ENCODE measurements at regions of chr4 and their contacts with region 1.

Region 1: GRCh38 chr4:151362404-151363164 is 37.2 kb upstream of the SH3D19 start:
- DNase-seq: peak; percentile 58 to 74
- H3K4me3 ChIP-seq: no peak overlapping the region
- H3K27ac ChIP-seq: no peak overlapping the region
- H3K4me1 ChIP-seq: no peaks in the 10 kb centered on the region
- H3K27me3 ChIP-seq: no peaks in the 10 kb centered on the region
- CTCF ChIP-seq: peak; percentile 90

Region 2: DNA sequence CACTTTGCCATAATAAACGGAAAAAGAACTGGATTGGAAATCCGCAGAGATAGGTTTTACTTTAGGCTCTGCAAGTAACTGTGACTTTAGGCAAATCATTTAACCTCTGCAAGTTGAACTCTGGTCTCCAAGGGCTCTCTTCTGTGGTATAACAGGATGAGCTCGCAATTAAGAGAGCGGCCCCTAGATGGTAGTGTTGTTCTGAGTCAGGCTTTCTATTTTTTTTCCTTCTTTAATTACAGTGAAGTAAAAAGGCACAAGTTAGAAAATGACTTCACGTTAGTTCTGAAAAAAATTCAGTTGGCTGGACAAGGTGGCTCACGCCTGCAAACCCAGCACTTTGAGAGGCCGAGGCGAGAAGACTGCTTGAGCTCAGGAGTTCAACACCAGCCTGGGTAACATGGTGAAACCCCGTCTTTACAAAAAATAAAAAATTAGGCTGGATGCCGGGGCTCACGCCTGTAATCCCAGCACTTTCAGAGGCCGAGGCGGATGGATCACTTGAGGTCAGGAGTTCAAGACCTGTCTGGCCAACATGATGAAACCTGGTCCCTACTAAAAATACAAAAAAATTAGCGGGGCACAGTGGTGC is 245.1 kb before region 1 on chr4:
- CTCF ChIA-PET with region 1: interaction called, 4 read pairs
- POLR2A ChIA-PET with region 1: no interaction called
- intact Hi-C with region 1: loop called (anchors 1 kb)
- DNase-seq: peak; percentile 56 to 59
- H3K4me3 ChIP-seq: no peak overlapping the region
- H3K27ac ChIP-seq: no peak overlapping the region
- H3K4me1 ChIP-seq: no peaks in the 10 kb centered on the region
- H3K27me3 ChIP-seq: no peaks in the 10 kb centered on the region
- CTCF ChIP-seq: peak; percentile 77

Region 3: DNA sequence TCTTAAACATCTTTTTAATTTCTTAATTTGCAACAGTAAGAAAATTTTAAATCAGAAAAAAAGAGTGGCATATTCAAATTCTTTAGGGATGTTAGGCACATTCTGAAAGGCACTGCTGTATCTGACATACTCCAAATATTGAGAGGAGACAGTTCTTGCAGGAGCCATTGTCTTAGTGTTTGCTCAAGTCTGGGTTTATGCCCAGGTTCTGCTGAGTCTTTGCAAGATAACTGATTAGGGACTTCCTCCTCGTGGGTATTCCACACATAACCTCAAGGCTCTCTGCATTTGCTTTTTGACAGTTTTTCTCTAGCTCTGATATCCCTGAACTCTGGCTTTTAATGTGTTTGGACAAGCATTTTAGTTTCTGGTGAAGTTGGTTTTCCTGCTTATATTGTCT is 210.6 kb before region 1 on chr4:
- CTCF ChIA-PET with region 1: no interaction called
- POLR2A ChIA-PET with region 1: no interaction called
- intact Hi-C with region 1: no loop called
- DNase-seq: no peak
- H3K4me3 ChIP-seq: no peak overlapping the region
- H3K27ac ChIP-seq: no peak overlapping the region
- H3K4me1 ChIP-seq: no peaks in the 10 kb centered on the region
- H3K27me3 ChIP-seq: no peaks in the 10 kb centered on the region
- CTCF ChIP-seq: no peak

Region 4: GRCh38 chr4:151184523-151185458 is 177.8 kb before region 1 on chr4:
- CTCF ChIA-PET with region 1: no interaction called
- POLR2A ChIA-PET with region 1: no interaction called
- intact Hi-C with region 1: no loop called
- DNase-seq: peak in 1 of 2 experiments; percentile 25
- H3K4me3 ChIP-seq: no peak overlapping the region
- H3K27ac ChIP-seq: peak overlapping the region; percentile 17; the same call in 1 of the 2 replicates
- H3K4me1 ChIP-seq: no peaks in the 10 kb centered on the region; the same call in 1 of the 2 replicates
- H3K27me3 ChIP-seq: no peaks in the 10 kb centered on the region
- CTCF ChIP-seq: no peak

Region 5: DNA sequence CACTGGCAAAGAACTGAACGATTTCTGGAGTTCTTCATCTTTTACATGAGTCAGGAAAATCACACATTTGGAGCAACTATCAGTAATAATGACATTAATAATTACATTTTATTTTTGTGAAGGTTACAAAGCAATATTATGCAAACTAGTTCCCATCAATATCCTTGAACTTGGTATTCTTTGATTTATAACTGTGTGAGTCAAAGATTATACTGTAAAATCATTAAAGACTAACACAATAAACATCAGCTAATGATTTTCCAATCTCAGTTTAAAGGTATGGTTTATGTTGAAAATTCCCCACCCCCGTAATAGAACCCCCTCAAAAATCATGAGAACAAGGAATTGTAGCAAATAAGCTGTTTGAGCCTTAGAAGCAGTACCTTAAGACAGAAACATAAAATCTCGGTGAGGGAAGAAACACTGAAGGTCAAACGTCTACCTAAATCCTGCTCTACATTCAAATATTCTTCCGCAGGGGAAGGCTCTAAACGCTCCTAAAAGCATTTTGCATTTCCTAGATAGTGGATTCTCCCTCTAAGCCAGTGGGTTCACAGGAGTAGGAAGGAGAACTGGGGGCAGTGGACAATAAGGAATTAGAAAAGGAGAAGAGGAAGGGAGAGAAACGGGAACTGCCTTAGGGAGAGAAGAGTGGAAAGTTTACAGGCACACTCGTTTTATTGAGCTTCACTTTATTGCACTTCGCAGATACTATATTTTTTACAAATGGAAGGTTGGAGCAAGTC is 14.9 kb before region 1 on chr4:
- CTCF ChIA-PET with region 1: interaction called, 10 read pairs
- POLR2A ChIA-PET with region 1: no interaction called
- intact Hi-C with region 1: no loop called
- DNase-seq: no peak
- H3K4me3 ChIP-seq: no peak overlapping the region
- H3K27ac ChIP-seq: no peak overlapping the region
- H3K4me1 ChIP-seq: no peaks in the 10 kb centered on the region
- H3K27me3 ChIP-seq: no peaks in the 10 kb centered on the region
- CTCF ChIP-seq: no peak

Region 6: DNA sequence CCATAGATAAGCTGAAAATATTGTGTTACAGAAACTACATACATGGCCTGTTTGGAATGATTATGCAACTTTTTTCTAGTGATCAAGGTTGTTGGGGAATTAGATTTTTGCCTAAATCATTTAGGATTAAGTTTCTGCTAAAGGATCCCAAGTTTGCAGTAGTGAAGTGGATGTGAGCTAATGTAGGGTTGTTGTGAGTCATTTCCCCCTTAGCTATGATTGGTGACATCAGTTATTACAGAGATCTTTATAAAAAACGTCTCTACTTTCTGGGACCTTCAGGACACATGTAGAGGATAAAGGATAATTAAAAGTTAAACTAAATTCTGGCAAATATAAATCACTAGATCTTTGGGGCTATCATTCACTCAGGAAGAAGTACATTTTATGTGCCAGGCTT is 264.9 kb after region 1 on chr4:
- CTCF ChIA-PET with region 1: interaction called, 14 read pairs
- POLR2A ChIA-PET with region 1: no interaction called
- intact Hi-C with region 1: no loop called
- DNase-seq: no peak
- H3K4me3 ChIP-seq: no peak overlapping the region
- H3K27ac ChIP-seq: no peak overlapping the region
- H3K4me1 ChIP-seq: no peaks in the 10 kb centered on the region
- H3K27me3 ChIP-seq: no peaks in the 10 kb centered on the region
- CTCF ChIP-seq: no peak

Region 7: DNA sequence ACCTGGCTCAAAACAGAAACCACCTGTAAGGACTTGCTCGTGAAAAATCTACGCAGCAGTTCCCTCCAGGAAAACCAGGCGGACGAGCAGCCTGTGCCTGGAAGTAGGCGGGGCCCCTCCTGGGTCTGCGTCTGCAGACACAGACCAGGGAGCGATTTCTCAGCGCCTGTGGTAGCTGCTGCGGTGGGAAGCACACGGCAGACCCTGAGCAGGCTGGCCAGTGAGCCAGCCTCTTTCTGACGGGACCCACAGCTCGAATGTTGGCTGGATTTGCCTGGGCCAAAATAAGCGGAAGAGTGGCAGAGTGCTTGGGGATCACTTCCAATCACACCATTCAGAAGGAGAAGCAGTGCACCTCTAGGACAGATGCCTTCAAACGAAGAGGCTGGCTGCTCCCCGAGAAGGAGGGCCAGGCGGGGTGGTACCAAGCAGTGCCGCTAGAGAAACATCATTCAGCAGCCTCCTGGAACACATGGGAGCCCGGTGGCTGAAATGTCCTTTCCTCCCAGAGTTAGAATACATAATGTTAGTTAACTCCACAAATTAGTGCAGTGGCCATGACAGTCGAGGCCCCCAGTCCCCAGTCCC is 312.3 kb after region 1 on chr4:
- CTCF ChIA-PET with region 1: no interaction called
- POLR2A ChIA-PET with region 1: no interaction called
- intact Hi-C with region 1: no loop called
- DNase-seq: no peak
- H3K4me3 ChIP-seq: no peak overlapping the region
- H3K27ac ChIP-seq: no peak overlapping the region
- H3K4me1 ChIP-seq: no peaks in the 10 kb centered on the region
- H3K27me3 ChIP-seq: no peaks in the 10 kb centered on the region
- CTCF ChIP-seq: no peak

Region 8: DNA sequence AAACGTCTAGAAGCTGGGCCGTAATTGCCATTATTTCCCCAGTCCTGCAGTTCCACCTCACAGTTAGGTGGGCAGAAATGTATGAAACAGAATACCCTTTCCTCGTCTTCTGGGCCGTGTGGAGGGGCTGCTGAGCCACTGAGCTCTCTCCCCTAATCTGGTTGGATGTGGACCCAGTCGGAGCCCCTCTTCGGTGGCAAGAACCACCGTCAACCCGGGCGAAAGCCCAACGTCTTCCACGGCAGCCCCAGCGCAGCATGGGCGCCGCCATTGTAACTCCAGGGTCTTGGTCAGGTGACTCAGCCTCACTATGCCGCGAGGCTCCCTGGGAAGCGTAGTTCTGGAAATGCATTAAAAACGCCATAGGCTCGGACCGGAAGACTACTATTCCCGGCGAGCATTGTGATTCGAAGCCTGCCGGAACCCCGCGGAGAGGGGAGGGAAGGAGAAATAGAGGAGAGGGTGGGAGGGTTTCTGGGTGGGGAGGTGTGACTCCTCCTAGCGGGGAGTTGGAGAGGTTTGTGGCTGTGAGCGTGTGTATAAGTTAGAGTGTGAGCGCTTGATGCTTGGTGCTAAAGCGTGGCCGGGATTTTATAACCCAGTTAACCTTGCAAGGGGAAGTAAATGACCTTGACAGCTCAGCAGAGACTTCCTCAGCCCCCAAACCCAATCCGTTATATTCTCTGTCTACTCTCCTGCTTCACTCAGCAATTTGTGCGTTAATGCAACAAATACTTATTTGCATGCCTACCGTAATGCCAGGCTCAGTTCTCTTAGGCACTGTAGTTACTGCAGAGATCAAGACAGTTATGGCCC is 398.3 kb after region 1 on chr4 and contains the start of gene GATB:
- CTCF ChIA-PET with region 1: no interaction called
- POLR2A ChIA-PET with region 1: no interaction called
- intact Hi-C with region 1: loop called (anchors 2 kb)
- DNase-seq: peak; percentile 87 to 88
- H3K4me3 ChIP-seq: peak within 1 kb of the TSS; percentile 94
- H3K27ac ChIP-seq: peak within 1 kb of the TSS; percentile 47
- H3K4me1 ChIP-seq: peaks cover 6% of the 10 kb centered on the region; the same call in 1 of the 2 replicates
- H3K27me3 ChIP-seq: no peaks in the 10 kb centered on the region
- CTCF ChIP-seq: peak; percentile 51
- total RNA-seq, gene GATB: 23.5 and 24.2 TPM in 2 replicates

Region 9: GRCh38 chr4:152385551-152385950 is 1023.0 kb after region 1 on chr4:
- CTCF ChIA-PET with region 1: no interaction called
- POLR2A ChIA-PET with region 1: no interaction called
- intact Hi-C with region 1: loop called (anchors 10 kb)
- DNase-seq: no peak
- H3K4me3 ChIP-seq: no peak overlapping the region
- H3K27ac ChIP-seq: no peak overlapping the region
- H3K4me1 ChIP-seq: no peaks in the 10 kb centered on the region
- H3K27me3 ChIP-seq: no peaks in the 10 kb centered on the region
- CTCF ChIP-seq: peak; percentile 66; the same call in 1 of the 2 replicates